CD4-positive, alpha-beta memory T cell (primary cell): ENCODE measurements at regions of chr14 and their contacts with region 1.

Region 1: DNA sequence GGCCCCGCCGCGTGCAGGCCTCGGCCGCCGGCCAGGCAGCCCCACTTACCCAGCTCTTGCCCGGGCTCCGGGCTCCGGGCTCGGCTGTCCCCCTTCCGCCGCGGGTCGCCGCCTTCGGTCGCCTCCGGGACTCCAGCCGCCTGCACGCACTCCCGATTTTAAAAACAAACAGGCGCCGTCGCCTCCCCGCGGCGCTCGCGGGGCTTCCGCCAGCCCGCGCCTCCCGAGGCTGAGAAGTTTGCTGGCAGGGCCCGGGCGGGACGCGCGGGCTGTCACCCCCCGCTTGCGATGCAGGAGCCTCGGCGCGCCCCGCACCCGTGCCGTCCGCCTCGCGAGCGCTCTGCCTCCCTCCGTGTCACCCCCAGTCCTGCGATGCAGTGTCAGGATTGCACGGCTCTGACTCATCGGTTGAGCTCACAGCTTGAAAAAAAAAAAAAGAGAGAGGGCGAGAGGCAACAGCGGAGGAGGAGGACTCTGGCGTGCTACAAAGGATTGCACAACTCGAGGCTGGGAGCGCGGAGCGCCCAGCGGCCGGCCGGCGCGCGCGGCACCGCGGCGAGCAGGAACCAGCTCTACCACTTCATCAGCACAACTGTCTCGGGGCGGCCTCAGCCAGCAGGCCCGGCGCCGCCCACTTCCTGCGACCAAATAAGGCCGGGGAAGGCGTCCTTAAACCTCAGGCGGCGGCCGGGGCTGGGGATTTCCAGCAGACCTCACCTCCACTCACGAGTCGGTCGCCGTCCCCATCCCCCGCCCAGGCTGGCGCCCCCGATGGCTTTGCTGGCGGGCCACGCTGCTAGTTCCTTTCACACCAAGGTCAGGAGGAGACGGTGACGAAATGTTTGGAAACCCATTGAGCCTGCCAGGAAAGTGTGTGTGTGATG is 45.8 kb upstream of the PNMA1 start:
- DNase-seq: peak; percentile 95 to 98 (median 96)
- H3K4me3 ChIP-seq: peak overlapping the region; percentile 2 to 73
- H3K4me3 Mint-ChIP-seq: peak overlapping the region; percentile 88 to 97 (median 92)
- H3K27ac ChIP-seq: peak overlapping the region; percentile 98
- H3K27ac Mint-ChIP-seq: peak overlapping the region; percentile 96 to 100 (median 99)
- H3K4me1 ChIP-seq: peaks cover 73% of the 10 kb centered on the region
- H3K4me1 Mint-ChIP-seq: peaks cover 66 to 90% (median 75%) of the 10 kb centered on the region in 4 donors
- H3K27me3 ChIP-seq: no peaks in the 10 kb centered on the region
- H3K27me3 Mint-ChIP-seq: no peaks in the 10 kb centered on the region

Region 2: DNA sequence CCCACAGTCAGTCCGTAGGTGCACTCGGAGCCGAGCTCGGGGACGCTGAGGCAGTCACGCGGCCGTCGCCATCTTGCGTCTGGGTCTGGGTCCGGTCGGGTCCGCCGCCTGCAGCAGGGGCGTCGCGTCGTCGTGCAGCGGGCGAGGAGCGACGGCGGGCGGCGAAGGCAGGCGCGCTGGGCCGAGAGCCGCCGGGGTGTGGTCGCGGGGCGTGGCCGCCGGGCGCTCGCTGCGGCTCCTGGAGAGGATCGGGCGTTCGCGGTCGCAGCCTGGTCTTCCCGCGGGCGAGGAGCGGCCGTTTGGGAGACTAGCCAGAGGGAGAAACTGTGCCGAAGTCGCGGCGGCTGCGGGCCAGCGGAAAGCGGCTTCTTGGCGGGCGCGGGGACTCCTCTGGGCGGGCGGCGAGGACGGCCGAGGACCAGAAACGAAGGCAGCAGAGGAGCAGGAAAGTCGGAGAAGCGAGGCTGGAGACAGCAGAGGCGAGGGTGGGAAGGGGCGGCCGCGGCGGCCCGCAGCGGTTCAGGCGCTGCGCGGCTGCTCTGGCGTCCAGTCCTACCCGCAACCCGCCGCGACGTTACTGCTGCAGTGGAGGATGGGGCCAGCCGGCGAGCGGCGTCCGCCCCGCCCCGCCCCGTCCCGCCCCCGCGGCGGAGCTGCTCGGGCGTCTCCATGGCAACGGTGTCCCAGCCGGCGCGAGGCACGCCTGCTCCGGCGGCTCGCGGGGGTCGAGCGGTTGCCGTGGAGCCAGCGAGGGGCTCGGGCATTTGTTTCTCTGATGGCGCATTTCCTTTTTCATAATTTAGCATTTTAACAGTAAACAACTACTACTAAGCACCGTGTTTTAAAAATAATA is 45.9 kb before region 1 on chr14 and contains the start of gene PNMA1:
- CTCF ChIA-PET with region 1: interaction called, 6 read pairs
- POLR2A ChIA-PET with region 1: interaction called, 43 read pairs
- intact Hi-C with region 1: loop called (anchors 5 kb)
- DNase-seq: peak; percentile 84 to 87 (median 85)
- H3K4me3 ChIP-seq: peak within 1 kb of the TSS; percentile 92 to 96
- H3K4me3 Mint-ChIP-seq: peak within 1 kb of the TSS; percentile 89 to 100 (median 98)
- H3K27ac ChIP-seq: peak within 1 kb of the TSS; percentile 80
- H3K27ac Mint-ChIP-seq: peak within 1 kb of the TSS; percentile 89 to 99 (median 95)
- H3K4me1 ChIP-seq: peaks cover 26% of the 10 kb centered on the region
- H3K4me1 Mint-ChIP-seq: peaks cover 18 to 35% (median 24%) of the 10 kb centered on the region in 4 donors
- H3K27me3 ChIP-seq: no peaks in the 10 kb centered on the region
- H3K27me3 Mint-ChIP-seq: no peaks in the 10 kb centered on the region
- total RNA-seq, gene PNMA1: 53.3 to 59.3 TPM

Region 3: DNA sequence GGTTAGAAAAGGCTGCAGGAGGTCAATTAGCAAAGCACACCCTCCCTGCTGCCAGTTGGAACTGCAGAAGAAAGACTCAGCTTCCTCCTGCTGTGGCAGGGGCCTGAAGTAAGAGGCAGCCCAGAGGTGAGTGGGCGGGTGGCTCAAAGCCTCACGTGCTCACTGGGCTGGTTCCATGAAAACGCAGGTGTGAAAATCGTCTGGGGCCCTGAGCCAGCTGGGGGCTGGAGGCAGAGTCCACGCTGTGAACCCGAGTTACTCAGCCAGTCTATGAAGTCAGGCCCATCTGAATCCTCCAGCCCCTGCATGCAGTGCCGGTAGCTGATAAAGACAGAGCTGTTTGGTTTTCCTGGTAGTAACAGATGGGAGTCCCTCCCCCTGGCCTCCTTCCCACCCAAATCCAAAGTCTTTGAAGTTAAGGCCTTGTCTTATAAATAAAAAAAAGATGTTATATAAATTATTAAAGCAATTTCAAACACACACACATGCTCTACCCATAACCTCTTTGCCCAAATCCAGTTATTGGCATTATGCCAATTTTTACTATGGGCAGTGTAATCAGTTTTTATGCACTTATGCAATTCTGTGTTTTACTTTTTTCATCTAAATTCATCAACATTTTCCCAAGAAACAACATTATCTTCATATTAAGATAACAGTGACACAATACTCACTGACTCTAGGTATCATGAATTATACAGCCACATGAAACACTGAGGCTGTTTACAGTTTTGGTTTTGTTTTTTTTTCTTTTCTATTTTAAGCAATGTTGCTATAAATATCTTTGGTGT is 12.1 kb after region 1 on chr14:
- CTCF ChIA-PET with region 1: interaction called, 47 read pairs
- POLR2A ChIA-PET with region 1: interaction called, 164 read pairs
- intact Hi-C with region 1: loop called (anchors 1 kb)
- DNase-seq: peak; percentile 55 to 84 (median 61)
- H3K4me3 ChIP-seq: no peak overlapping the region
- H3K4me3 Mint-ChIP-seq: peak overlapping the region; percentile 55 to 88 (median 62)
- H3K27ac ChIP-seq: peak overlapping the region; percentile 50
- H3K27ac Mint-ChIP-seq: peak overlapping the region; percentile 83 to 96 (median 93)
- H3K4me1 ChIP-seq: peaks cover 78% of the 10 kb centered on the region
- H3K4me1 Mint-ChIP-seq: peaks cover 51 to 83% (median 66%) of the 10 kb centered on the region in 4 donors
- H3K27me3 ChIP-seq: no peaks in the 10 kb centered on the region
- H3K27me3 Mint-ChIP-seq: no peaks in the 10 kb centered on the region

Region 4: DNA sequence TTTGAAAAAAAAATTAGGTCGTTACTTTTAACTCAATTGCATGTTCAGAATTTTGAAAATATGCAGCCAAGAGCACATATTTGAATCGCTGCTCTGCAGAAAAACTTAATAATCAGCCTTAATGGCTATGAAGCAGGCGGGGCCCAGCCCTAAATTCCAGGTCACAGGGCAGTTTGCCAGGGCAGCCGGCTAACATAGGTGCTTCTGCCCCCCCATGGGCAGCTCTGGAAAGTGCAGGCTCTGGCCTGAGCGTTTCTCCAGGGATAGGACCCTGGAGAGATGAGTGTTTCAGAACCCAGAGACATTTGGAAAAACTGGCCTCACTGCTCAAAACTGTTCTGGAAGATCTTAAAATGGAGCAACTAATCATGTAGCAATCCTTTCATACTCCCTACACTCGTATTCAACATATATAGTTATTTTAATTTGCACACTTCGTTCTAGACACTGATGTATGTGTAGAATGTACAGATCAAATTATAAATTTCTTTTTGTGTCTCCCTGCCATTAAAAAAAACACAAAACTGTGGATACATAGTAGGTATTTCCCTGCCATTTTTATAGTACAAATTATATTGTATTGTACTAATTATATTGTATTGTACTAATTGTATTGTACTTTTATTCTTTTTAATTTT is 65.7 kb after region 1 on chr14:
- CTCF ChIA-PET with region 1: interaction called, 19 read pairs
- POLR2A ChIA-PET with region 1: interaction called, 10 read pairs
- intact Hi-C with region 1: loop called (anchors 1 kb)
- DNase-seq: peak; percentile 68 to 75 (median 74)
- H3K4me3 ChIP-seq: no peak overlapping the region
- H3K4me3 Mint-ChIP-seq: no peak overlapping the region
- H3K27ac ChIP-seq: no peak overlapping the region
- H3K27ac Mint-ChIP-seq: peak overlapping the region in 1 of 7 donors; percentile 42
- H3K4me1 ChIP-seq: peaks cover 13% of the 10 kb centered on the region
- H3K4me1 Mint-ChIP-seq: peaks cover 7 to 11% (median 10%) of the 10 kb centered on the region in 4 donors
- H3K27me3 ChIP-seq: no peaks in the 10 kb centered on the region
- H3K27me3 Mint-ChIP-seq: no peaks in the 10 kb centered on the region

Region 5: GRCh38 chr14:73886449-73887317 is 126.7 kb after region 1 on chr14 and contains the start of gene ZNF410:
- CTCF ChIA-PET with region 1: interaction called, 4 read pairs
- POLR2A ChIA-PET with region 1: interaction called, 15 read pairs
- intact Hi-C with region 1: no loop called
- DNase-seq: peak; percentile 84 to 90 (median 86)
- H3K4me3 ChIP-seq: peak within 1 kb of the TSS; percentile 89
- H3K4me3 Mint-ChIP-seq: peak within 1 kb of the TSS; percentile 89 to 99 (median 98)
- H3K27ac ChIP-seq: peak within 1 kb of the TSS; percentile 96
- H3K27ac Mint-ChIP-seq: peak within 1 kb of the TSS; percentile 85 to 100 (median 99)
- H3K4me1 ChIP-seq: peaks cover 43% of the 10 kb centered on the region
- H3K4me1 Mint-ChIP-seq: peaks cover 34 to 55% (median 42%) of the 10 kb centered on the region in 4 donors
- H3K27me3 ChIP-seq: no peaks in the 10 kb centered on the region
- H3K27me3 Mint-ChIP-seq: no peaks in the 10 kb centered on the region
- total RNA-seq, gene ZNF410: 46.2 to 47.3 TPM